Activated CD8-positive, alpha-beta T cell treated with anti-CD3 and anti-CD28 coated beads for 36 hours (primary cell): ENCODE measurements at regions of chr4 and their contacts with region 1.

Region 1: DNA sequence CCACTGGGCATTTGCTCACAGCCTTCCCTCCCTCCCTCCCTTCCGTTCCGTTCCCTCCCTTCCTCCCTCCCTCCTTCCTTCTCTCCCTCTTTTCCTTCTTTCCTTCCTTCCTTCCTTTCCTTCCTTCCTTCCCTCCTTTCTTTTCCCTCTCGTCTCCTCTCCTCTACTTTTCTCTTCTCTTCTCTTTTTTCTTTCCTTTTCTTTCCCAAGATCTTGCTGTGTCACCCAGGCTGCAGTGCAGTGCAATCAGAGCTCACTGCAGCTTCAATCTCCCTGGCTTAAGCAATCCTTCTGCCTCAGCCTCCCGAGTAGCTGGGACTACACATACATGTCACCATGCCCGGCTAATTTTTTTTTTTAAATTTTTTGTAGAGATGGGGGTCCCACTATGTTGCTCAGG is 26.7 kb upstream of the ING2 start:
- DNase-seq: no peak
- ATAC-seq: no peak
- H3K4me3 Mint-ChIP-seq: no peak overlapping the region
- H3K27ac Mint-ChIP-seq: no peak overlapping the region
- H3K4me1 Mint-ChIP-seq: no peaks in the 10 kb centered on the region
- H3K27me3 Mint-ChIP-seq: no peaks in the 10 kb centered on the region
- CTCF ChIP-seq: no peak

Region 2: DNA sequence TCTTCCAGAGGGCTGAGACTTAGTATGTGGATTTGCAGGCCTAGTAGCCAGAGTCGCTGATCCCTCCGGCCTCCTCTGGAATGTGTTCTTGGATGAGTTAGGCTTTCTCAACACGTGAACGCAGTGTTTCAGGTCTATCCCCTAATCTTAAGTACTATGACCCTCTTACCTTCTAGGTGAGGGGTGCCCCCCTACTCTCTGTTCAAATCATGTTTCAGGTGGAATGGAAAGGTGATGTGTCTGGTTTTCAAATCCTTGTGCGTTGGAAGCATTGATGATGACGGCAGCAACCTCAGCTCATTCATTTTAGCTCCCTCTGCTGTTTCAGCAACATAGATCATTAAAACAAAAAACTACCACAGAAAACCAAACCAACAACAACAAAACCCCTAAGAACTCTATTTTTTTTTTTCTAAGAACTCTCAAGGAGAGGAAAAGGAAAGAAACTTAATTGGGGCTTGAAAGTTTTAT is 124.5 kb after region 1 on chr4:
- CTCF ChIA-PET with region 1: interaction called, 4 read pairs
- POLR2A ChIA-PET with region 1: no interaction called
- intact Hi-C with region 1: loop called (anchors 5 kb)
- DNase-seq: no peak
- ATAC-seq: no peak
- H3K4me3 Mint-ChIP-seq: no peak overlapping the region
- H3K27ac Mint-ChIP-seq: no peak overlapping the region
- H3K4me1 Mint-ChIP-seq: no peaks in the 10 kb centered on the region
- H3K27me3 Mint-ChIP-seq: peaks cover 6% of the 10 kb centered on the region
- CTCF ChIP-seq: no peak